Naive thymus-derived CD8-positive, alpha-beta T cell (primary cell): ENCODE measurements at regions of chr11 and their contacts with region 1.

Region 1: GRCh38 chr11:78188286-78189173 is at the starts of genes KCTD21 and USP35:
- DNase-seq: peak; percentile 79 to 94 (median 86)
- ATAC-seq: peak; percentile 90 to 93
- H3K4me3 Mint-ChIP-seq: peak within 1 kb of the TSS; percentile 95 to 99 (median 98)
- H3K27ac Mint-ChIP-seq: peak within 1 kb of the TSS; percentile 87 to 99 (median 96)
- H3K4me1 Mint-ChIP-seq: peaks cover 30 to 63% (median 56%) of the 10 kb centered on the region in 4 donors
- H3K27me3 Mint-ChIP-seq: no peaks in the 10 kb centered on the region
- polyA plus RNA-seq, gene KCTD21: 0.08 to 2.5 (median 0.94) TPM
- polyA plus RNA-seq, gene USP35: 0.76 to 1.5 (median 1.5) TPM

Region 2: GRCh38 chr11:78202733-78203167 is 14.2 kb after region 1 on chr11:
- POLR2A ChIA-PET with region 1: interaction called, 63 read pairs
- DNase-seq: peak in 9 of 10 donors; percentile 39 to 85 (median 76)
- ATAC-seq: peak; percentile 83
- H3K4me3 Mint-ChIP-seq: peak overlapping the region; percentile 73 to 91 (median 87)
- H3K27ac Mint-ChIP-seq: peak overlapping the region; percentile 85 to 99 (median 97)
- H3K4me1 Mint-ChIP-seq: peaks cover 25 to 52% (median 46%) of the 10 kb centered on the region in 4 donors
- H3K27me3 Mint-ChIP-seq: no peaks in the 10 kb centered on the region

Region 3: DNA sequence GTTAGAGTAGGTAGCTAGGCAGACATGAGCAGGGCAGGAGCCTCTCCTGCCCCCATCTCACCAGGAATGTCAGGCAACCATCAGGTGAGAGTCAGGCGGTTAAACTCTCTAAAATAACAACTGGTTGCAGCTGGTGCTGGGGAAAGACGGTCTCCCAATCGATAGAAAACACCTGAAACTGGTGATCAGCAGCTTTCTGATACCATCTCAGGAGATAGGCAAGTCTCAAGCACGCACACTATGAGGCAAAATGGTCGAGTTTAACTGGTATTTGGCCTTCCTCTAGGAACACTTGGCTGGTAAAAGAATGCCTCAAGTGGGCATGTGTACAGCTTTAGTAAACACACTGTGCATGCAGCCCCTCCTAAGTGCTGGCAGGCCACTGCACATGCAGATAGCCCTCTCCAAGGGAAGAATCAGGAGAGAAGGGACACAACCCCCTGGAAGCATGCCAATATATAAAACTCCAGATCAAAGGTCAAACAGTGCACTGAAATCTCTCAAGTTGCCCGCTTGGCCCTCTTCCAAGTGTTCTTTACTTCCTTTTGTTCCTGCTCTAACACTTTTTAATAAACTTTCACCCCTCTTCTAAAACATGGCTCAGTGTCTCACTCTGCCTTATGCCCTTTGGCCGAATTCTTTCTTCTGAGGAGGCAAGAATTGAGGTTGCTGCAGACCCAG is 88.9 kb after region 1 on chr11:
- POLR2A ChIA-PET with region 1: no interaction called
- DNase-seq: no peak
- ATAC-seq: no peak
- H3K4me3 Mint-ChIP-seq: no peak overlapping the region
- H3K27ac Mint-ChIP-seq: peak overlapping the region in 1 of 10 donors; percentile 32
- H3K4me1 Mint-ChIP-seq: peaks cover 0 to 6% (median 3%) of the 10 kb centered on the region in 4 donors
- H3K27me3 Mint-ChIP-seq: no peaks in the 10 kb centered on the region